ENCODE measurements at regions of chr17 and their contacts with region 1.

Region 1: GRCh38 chr17:81365148-81365600 is 30.1 kb upstream of the BAHCC1 start:
- DNase-seq: peak; percentile 90
- H3K4me3 ChIP-seq: peak overlapping the region in 3 of 4 donors; percentile 22 to 44 (median 31)
- H3K27ac ChIP-seq: peak overlapping the region; percentile 56 to 83 (median 74)
- H3K4me1 ChIP-seq: peaks cover 0 to 23% (median 21%) of the 10 kb centered on the region in 4 donors
- H3K27me3 ChIP-seq: no peaks in the 10 kb centered on the region
- CTCF ChIP-seq: no peak
- EP300 ChIP-seq: no peak
- POLR2A ChIP-seq: peak in 1 of 2 donors; percentile 42

Region 2: DNA sequence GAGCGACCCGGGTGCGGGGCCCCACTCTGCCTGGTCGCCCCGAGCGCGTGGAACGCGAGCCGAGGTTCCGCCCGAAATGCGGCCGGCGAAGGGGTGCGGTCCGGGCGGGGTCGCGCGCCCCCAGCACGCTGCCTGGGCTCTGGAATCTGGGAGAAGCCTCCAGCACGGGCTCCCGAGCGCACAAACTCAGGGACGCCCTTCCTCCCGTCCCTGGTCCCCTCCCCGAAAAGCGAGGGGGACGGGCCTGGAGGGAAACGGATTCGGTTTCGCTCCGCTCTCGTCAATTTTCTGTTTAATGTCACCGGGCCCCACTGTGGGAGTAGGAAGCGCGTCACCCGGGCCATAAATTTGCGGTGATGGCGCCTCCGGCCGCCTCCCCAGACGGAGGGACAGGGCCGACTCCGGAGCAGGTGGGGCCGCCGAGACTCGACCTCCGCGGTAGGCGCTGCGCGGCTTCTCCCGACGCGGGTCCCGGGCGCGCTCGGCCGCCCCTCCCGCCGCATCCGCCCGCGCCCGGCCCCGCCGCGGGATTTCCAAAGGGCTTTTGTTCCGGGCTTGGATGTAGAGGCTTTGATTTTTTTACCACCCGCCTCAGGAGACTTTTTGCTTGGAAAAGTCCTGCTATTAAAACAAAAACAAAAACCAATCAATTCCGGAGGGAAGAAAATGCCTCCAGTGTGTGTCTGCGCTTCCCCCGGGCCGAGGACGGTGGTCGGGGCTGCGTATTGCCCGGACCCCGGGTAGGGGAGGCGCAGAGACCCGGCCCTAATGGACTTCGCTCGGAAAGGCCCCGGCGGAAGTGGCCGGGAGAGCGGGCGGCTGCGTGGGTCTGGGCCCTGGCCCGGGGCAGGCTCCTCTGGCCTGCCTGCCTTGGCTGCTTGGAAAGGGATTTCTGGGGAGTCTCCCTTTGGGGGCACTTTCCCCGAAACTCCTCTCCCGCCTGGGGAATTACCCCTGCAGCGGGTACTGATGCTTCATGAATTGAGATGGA is 22.2 kb after region 1 on chr17:
- intact Hi-C with region 1: loop called (anchors 2 kb)
- DNase-seq: peak; percentile 84
- H3K4me3 ChIP-seq: peak overlapping the region; percentile 66 to 87 (median 75)
- H3K27ac ChIP-seq: peak overlapping the region; percentile 93 to 99 (median 98)
- H3K4me1 ChIP-seq: peaks cover 0 to 70% (median 56%) of the 10 kb centered on the region in 4 donors
- H3K27me3 ChIP-seq: no peaks in the 10 kb centered on the region
- CTCF ChIP-seq: no peak
- EP300 ChIP-seq: peak in 1 of 4 donors; percentile 6
- POLR2A ChIP-seq: peak in 1 of 2 donors; percentile 15

Measured in sigmoid colon (tissue), 7 donors.